Activated CD4-positive, alpha-beta memory T cell treated with anti-CD3 and anti-CD28 coated beads for 36 hours (primary cell): ENCODE measurements at regions of chr12 and their contacts with region 1.

Region 1: DNA sequence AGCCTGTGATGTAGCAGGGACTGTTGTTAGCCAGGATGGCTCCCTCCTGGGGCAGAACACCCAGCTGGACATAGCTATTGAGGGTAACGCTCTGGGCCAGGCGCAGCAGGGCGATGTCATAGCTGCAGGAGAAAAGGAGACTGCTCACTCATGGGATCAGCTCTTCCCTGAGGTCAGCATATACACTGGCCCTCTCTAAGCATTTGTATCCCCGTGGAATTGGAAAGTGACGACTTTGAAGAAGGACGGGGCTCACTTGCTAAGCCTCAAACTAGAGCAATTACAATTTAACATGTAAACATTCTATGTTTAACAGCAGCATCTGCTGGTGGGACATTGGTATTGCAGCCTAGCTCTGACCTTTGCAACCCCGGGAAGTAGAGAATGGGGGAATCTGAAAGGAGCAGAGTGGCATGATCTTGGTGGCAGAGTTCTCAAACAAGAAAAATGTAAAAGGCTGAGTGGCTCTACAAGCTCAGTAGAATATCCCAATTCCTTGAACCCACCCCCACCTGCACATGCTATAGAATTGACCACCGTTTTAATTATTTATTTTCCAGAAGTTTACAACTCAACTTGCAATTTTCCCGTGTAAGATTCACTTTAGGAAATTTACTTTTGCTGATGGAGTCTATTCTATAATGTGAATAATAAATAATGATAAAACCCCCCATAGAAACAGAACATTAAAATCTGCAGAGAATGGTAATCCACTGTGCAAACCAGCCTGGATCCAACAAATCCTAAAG is 5.0 kb downstream of the CELA1 start:
- DNase-seq: peak; percentile 78
- H3K4me3 Mint-ChIP-seq: no peak overlapping the region
- H3K27ac Mint-ChIP-seq: no peak overlapping the region
- H3K4me1 Mint-ChIP-seq: peaks cover 19% of the 10 kb centered on the region
- H3K27me3 Mint-ChIP-seq: no peaks in the 10 kb centered on the region

Region 2: GRCh38 chr12:50979369-50980052 is 361.9 kb before region 1 on chr12:
- CTCF ChIA-PET with region 1: no interaction called
- POLR2A ChIA-PET with region 1: no interaction called
- intact Hi-C with region 1: no loop called
- DNase-seq: peak; percentile 72
- H3K4me3 Mint-ChIP-seq: peak overlapping the region; percentile 48
- H3K27ac Mint-ChIP-seq: peak overlapping the region; percentile 89
- H3K4me1 Mint-ChIP-seq: peaks cover 26% of the 10 kb centered on the region
- H3K27me3 Mint-ChIP-seq: no peaks in the 10 kb centered on the region

Region 3: DNA sequence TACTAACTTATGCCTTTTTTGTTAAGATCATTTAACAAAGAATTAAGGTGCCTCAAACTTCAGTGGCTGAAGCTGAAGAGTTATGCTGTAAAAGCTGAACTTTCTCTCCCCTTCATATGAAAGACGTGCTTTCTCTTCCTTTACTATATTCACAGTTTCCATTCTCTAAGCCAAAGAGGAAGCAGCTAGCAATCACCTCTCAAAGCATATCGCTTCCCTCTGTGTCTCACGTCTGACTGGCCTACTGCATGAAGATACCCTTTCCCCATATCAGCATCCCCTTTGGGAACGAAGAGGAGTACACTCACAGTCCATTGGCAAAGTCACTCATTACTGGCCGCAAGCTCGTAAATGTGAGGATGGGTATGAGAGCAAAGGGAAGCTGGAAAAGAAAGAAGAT is 350.1 kb before region 1 on chr12:
- CTCF ChIA-PET with region 1: no interaction called
- POLR2A ChIA-PET with region 1: no interaction called
- intact Hi-C with region 1: no loop called
- DNase-seq: no peak
- H3K4me3 Mint-ChIP-seq: no peak overlapping the region
- H3K27ac Mint-ChIP-seq: peak overlapping the region; percentile 7
- H3K4me1 Mint-ChIP-seq: peaks cover 35% of the 10 kb centered on the region
- H3K27me3 Mint-ChIP-seq: no peaks in the 10 kb centered on the region

Region 4: GRCh38 chr12:51047655-51048540 is 293.5 kb before region 1 on chr12 and contains the start of gene LETMD1:
- CTCF ChIA-PET with region 1: interaction called, 9 read pairs
- POLR2A ChIA-PET with region 1: no interaction called
- intact Hi-C with region 1: loop called (anchors 2 kb)
- DNase-seq: peak; percentile 95
- H3K4me3 Mint-ChIP-seq: peak within 1 kb of the TSS; percentile 97
- H3K27ac Mint-ChIP-seq: peak within 1 kb of the TSS; percentile 96
- H3K4me1 Mint-ChIP-seq: peaks cover 31% of the 10 kb centered on the region
- H3K27me3 Mint-ChIP-seq: no peaks in the 10 kb centered on the region
- total RNA-seq, gene LETMD1: 79.8 to 84.0 TPM

Region 5: GRCh38 chr12:51188359-51189051 is 152.9 kb before region 1 on chr12:
- CTCF ChIA-PET with region 1: no interaction called
- POLR2A ChIA-PET with region 1: no interaction called
- intact Hi-C with region 1: no loop called
- DNase-seq: no peak
- H3K4me3 Mint-ChIP-seq: no peak overlapping the region
- H3K27ac Mint-ChIP-seq: no peak overlapping the region
- H3K4me1 Mint-ChIP-seq: no peaks in the 10 kb centered on the region
- H3K27me3 Mint-ChIP-seq: no peaks in the 10 kb centered on the region

Region 6: DNA sequence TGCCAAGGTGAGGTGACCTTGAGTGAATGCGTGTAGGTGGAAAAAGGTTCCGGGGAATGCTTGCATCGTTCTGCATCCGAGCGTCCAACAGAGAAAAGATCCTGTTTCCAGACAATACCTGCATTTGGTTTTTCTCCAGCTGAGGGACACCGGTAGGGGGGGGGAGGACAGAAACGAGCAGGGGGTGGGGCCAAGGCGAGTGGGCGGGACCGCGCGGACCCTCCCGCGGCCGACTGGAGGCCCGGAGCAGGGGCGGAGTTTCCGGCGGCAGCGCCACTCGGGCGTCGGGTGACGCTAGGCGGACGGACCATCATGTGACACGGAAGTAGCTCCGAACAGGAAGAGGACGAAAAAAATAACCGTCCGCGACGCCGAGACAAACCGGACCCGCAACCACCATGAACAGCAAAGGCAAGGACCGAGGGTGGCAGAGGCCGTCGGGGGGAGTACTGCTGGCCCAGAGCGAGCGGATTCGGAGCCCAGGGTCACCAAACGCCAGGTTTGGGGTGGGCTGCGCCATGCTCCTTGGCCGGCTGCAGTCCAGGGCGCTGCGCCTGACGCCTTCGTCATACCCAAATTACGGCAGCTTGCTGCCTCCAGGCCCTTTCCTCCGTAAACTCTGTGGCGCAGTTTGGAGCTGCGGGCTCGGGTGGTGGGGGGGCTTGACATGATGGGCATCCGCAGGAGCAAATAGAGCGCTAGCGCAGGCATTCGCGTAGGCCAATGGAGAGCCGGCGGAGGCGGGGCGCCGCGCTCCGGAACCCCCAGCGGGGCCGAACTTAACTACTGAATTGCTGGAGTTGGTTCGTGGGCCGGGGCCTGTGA is 102.7 kb before region 1 on chr12 and contains the start of gene DAZAP2:
- CTCF ChIA-PET with region 1: interaction called, 11 read pairs
- POLR2A ChIA-PET with region 1: no interaction called
- intact Hi-C with region 1: no loop called
- DNase-seq: peak; percentile 97
- H3K4me3 Mint-ChIP-seq: peak within 1 kb of the TSS; percentile 94
- H3K27ac Mint-ChIP-seq: peak within 1 kb of the TSS; percentile 98
- H3K4me1 Mint-ChIP-seq: peaks cover 33% of the 10 kb centered on the region
- H3K27me3 Mint-ChIP-seq: no peaks in the 10 kb centered on the region
- total RNA-seq, gene DAZAP2: 106 to 119 TPM

Region 7: DNA sequence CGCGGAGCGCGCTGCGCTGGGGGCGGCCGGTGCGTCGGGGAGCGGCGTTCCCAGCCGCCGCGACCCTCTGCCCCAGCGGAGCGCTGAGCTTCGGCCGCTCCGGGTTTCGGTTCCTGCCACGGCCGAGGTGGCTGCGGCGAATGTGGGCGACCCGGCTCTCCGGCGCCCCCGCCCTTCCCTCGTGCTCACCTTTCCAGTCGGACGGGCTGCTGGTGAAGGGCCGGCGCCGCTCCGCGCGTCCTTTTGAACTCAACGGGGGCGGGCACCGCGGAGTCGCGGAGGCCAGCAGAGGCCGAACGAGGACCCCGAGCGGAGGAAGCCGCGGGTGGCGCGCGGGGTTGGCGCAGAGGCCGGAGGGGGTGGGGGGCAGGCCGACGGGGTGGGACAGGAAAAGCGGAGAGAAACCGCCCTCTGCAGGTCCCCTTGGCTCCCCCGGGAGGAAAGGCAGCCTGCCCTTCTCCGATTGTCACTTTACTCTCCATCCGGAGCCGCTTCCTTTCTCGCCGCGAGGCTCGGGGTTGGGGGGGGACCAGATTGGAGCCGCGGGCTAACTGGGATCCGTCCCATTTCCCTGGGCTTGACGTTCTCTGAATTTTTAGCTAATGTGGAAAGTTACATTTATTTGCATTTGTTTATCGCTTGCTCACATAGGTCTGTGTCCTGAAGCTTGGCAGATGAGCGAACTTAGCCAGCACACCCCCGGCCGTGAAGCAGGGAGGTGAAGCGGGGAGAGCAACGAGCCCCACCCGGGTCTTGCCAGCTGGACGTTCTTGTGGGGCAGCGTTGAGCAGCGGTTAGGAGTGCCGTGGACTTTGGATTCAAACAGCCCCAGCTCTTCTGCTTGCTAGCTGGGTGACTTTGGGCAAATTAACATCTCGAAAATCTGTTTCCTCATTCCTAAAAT is 71.1 kb before region 1 on chr12 and contains the start of gene SMAGP:
- CTCF ChIA-PET with region 1: interaction called, 118 read pairs
- POLR2A ChIA-PET with region 1: interaction called, 4 read pairs
- intact Hi-C with region 1: loop called (anchors 1 kb)
- DNase-seq: peak; percentile 56
- H3K4me3 Mint-ChIP-seq: peak within 1 kb of the TSS; percentile 78
- H3K27ac Mint-ChIP-seq: no peak within 1 kb of the TSS
- H3K4me1 Mint-ChIP-seq: peaks cover 21% of the 10 kb centered on the region
- H3K27me3 Mint-ChIP-seq: peaks cover 10% of the 10 kb centered on the region
- total RNA-seq, gene SMAGP: 0.55 to 0.73 TPM

Region 8: DNA sequence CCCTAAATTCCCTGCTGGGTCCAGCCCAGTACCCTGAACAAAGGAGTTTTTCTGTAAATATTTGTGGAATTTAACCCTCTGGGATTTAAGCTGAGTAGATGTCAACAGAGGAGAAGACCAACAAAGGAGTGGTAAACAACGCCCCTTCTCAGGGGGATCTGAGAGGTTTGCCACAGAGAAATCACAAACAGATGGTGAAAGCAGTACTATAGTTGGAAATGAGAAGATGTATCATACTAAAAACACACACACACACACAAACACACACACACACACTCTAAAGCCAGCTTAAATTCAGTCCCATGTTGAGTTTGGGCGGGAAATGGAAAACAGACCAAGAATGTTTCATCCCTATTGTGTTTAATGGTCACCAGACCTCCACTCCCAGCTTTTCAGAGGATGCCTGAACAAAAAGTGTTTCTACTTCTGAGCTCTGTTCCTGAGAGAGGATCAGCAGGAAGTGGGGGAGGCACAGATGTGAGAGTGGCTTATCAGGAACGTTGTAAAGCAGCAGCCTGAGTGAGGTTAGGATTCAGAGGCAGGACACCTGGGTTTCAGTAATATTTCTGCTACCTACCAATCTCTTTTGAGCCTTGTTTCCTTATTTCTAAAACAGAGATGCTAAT is 20.6 kb before region 1 on chr12:
- CTCF ChIA-PET with region 1: interaction called, 22 read pairs
- POLR2A ChIA-PET with region 1: interaction called, 4 read pairs
- intact Hi-C with region 1: loop called (anchors 2 kb)
- DNase-seq: peak; percentile 32
- H3K4me3 Mint-ChIP-seq: peak overlapping the region; percentile 73
- H3K27ac Mint-ChIP-seq: peak overlapping the region; percentile 99
- H3K4me1 Mint-ChIP-seq: peaks cover 71% of the 10 kb centered on the region
- H3K27me3 Mint-ChIP-seq: no peaks in the 10 kb centered on the region

Region 9: DNA sequence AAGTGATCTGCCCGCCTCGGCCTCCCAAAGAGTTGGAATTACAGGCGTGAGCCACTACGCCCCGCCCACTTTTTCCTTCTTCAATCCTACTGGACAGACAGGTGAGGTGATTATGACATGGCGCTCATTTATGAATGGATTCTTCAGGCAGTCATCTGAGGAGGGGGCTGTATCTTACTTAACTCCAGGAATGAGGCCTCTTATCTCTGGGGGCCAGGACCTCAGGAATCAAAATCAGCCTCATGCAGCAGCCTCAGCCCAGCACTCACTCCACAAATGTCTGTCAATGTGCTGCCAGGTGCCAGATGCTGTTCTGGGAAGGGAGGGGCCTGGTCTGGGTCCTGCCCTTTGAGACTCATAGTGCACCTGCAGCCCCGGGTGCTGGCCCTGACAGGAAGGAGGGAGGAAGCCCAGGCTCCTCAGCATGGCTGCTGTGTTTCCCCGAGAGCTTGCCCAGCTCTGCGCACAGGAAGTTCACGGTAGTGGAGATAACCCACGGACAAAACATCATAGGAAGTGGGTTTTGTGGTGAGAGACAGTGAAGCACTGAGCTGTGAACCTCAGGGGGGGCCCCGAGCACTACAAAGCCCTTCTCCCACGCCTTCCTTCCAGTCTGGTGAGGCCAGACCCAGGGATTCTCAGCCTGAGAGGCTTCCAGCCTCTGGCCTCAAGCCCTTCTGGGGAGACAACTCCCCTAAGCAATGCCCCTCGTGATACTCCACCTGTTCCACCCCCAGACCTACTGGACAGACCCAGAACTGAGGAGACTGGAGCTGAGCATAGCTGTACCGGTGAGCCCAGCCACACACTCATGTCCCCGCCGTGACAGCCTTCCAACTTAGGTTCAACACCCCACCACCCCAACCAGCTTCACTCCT is 27.4 kb after region 1 on chr12:
- CTCF ChIA-PET with region 1: interaction called, 12 read pairs
- POLR2A ChIA-PET with region 1: interaction called, 3 read pairs
- intact Hi-C with region 1: no loop called
- DNase-seq: peak; percentile 95
- H3K4me3 Mint-ChIP-seq: peak overlapping the region; percentile 61
- H3K27ac Mint-ChIP-seq: peak overlapping the region; percentile 86
- H3K4me1 Mint-ChIP-seq: peaks cover 51% of the 10 kb centered on the region
- H3K27me3 Mint-ChIP-seq: no peaks in the 10 kb centered on the region